ENCODE measurements at regions of chr2 and their contacts with region 1.

Region 1: GRCh38 chr2:11375025-11375688 is 30.7 kb upstream of the ROCK2 start:
- DNase-seq: no peak
- H3K4me3 ChIP-seq: no peak overlapping the region
- CTCF ChIP-seq: no peak

Region 2: DNA sequence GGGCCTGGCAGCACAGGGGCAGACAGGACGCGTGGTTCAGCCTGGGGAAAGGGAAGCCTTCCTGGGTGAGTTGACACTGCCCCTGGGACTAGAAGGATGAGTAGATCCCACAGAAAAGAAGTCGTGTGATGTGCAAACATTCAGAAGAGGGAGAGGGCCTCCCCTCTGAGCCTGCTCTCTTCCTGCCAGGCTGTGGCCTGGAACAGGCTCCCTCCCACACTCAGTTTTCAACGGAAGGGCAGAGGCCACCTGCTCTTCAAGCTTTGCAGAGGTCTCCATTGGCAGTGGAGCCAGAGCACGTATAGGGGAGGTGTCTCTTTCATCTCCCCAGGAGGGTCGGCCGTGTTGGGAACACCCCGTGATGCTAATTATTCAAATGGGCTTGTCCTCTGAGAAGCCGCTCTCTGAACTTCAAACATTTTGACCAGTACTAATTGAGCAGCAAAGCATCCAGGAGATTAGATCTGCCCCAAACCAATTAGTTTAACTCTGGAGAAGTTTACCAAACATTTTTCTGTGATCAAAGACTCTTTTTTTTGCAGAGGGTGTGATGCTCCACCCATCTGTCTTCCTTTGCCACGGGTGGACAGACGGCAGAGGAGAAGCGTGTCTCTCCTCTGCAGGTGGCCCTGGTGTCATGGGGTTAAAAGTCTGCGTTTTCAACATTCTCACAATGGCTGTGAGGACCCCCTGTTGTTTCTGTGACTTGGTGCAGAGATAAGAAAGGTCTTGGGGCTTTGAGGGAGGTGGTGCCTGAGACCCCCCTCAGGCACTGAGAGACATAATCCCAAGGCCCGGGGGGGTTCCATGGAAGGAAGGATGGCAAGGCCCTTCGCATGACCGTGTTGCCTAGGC is 897.5 kb before region 1 on chr2:
- CTCF ChIA-PET with region 1: no interaction called
- POLR2A ChIA-PET with region 1: no interaction called
- DNase-seq: no peak
- H3K4me3 ChIP-seq: no peak overlapping the region
- CTCF ChIP-seq: no peak

Region 3: GRCh38 chr2:11344342-11344955 is 30.7 kb before region 1 on chr2 and contains the start of gene ROCK2:
- CTCF ChIA-PET with region 1: no interaction called
- POLR2A ChIA-PET with region 1: interaction called, 28 read pairs
- DNase-seq: no peak
- H3K4me3 ChIP-seq: peak within 1 kb of the TSS; percentile 82
- CTCF ChIP-seq: no peak

Region 4: GRCh38 chr2:11778923-11779757 is 404.0 kb after region 1 on chr2:
- CTCF ChIA-PET with region 1: no interaction called
- POLR2A ChIA-PET with region 1: no interaction called
- DNase-seq: no peak
- H3K4me3 ChIP-seq: no peak overlapping the region
- CTCF ChIP-seq: peak; percentile 93

Measured in AG04449 (cell line).